Gastrocnemius medialis (tissue), 4 donors: ENCODE measurements at regions of chr9 and their contacts with region 1.

Region 1: GRCh38 chr9:35385042-35385441 is 104.9 kb upstream of the RUSC2 start:
- DNase-seq: no peak
- ATAC-seq: peak; percentile 55 to 57
- H3K4me3 ChIP-seq: no peak overlapping the region
- H3K27ac ChIP-seq: no peak overlapping the region
- H3K4me1 ChIP-seq: no peaks in the 10 kb centered on the region
- H3K27me3 ChIP-seq: no peaks in the 10 kb centered on the region
- CTCF ChIP-seq: peak in 2 of 5 experiments; percentile 18 to 31
- POLR2A ChIP-seq: no peak

Region 2: DNA sequence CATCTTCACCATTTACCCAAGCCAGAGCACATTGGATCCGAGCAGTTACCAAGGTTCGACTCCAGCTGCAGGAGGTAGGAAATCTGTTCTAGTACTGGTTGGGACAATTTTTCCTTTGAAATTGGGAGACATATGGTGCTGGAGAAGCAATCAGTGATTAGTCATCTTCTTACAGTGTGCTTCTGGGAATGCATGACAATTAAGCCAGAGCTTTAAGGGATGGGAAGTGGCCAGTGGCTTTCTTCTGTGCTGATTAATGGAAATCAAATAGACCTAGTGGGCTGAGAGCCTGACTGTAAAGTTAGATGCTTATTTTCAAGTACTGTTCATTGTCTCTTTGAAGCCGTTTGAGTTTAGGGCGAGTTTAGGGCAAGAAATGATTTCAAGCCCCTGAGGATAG is 71.1 kb before region 1 on chr9:
- in situ Hi-C with region 1: no loop called
- intact Hi-C with region 1: loop called (anchors 5 kb)
- DNase-seq: no peak
- ATAC-seq: no peak
- H3K4me3 ChIP-seq: no peak overlapping the region
- H3K27ac ChIP-seq: peak overlapping the region in 3 of 4 donors; percentile 7 to 67 (median 23)
- H3K4me1 ChIP-seq: peaks cover 19 to 26% of the 10 kb centered on the region in 2 donors
- H3K27me3 ChIP-seq: no peaks in the 10 kb centered on the region
- CTCF ChIP-seq: no peak
- POLR2A ChIP-seq: no peak